GM18951 (cell line): ENCODE measurements at regions of chr3 and their contacts with region 1.

Region 1: GRCh38 chr3:139319428-139320402 is 24.1 kb upstream of the MRPS22 start:
- POLR2A ChIP-seq: no peak

Region 2: GRCh38 chr3:138941259-138941885 is 378.3 kb before region 1 on chr3:
- in situ Hi-C with region 1: loop called (anchors 5 kb)
- POLR2A ChIP-seq: no peak

Region 3: DNA sequence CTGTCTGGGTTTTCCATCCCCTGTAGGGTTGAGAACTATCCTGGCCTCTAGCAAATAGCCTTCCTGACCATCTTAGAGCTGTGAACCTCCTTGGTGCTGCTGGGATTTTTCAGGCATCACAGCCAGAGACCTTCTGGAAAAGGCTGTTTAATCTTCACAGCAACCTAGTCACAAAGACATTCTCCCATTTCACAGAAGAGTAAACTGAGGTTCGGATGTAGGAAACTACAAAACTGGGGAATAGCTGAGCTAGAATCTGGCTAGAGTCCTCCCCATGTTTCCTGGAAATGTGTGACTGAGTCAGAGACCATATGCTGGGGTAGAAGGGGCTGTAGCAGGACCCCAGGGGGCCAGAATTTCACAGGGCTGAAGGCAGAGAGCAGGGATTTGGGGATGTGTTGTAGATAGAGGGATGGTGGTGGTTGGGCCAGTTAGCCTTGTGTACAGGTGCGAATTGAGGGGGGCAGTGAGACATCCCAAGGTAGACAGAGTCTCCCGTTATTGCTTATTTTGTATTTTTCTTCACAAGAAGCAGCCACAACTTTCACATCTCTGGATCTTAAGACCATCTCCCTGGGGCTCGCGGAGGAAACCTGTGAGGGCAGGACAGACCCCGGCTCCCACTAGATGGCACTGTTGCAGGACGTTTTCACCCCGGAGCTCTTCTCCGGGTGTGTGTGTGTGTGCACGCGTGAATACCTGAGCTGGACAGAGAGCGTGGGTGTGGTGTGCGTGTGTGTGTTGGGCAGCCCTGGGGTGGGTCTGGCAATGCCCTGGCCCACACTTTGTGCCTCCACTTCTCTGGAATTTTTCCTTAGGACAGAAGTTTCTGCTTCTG is 208.1 kb before region 1 on chr3:
- in situ Hi-C with region 1: loop called (anchors 25 kb)
- POLR2A ChIP-seq: no peak